Psoas muscle (tissue), 8 donors: ENCODE measurements at regions of chr9 and their contacts with region 1.

Region 1: DNA sequence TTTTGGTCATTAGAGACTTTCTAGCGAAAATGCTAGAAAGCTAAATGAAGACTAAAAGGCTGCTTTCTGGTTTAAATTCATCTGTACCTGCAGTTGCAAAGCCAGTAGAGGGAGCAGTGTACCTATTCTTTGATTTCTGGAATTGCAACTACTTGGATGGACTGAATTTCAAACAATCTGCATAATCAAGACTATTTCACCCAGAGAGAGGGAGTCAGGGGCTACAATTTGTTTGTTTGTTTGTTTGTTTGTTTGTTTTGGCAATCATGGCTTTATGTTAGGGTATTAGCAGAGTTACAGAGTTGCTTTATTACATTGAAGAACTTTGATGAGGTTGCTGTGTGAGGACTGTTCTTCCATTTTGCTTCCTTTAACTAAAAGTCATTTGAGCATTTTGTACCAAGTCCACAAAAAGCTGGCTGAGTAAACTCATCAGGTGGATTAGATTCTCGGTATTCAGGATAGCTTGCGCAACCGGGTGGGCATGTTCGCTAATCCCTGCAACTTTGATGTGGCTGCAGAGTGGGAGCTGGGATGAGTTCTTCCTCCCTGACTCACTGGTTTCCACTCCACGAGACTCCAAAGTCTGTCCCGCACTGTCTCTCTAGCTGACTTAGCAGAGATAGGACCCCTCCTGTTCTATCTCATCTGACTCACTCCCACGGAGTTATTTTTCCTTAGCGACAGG is 80.0 kb upstream of the TUT7 start:
- DNase-seq: peak; percentile 60 to 74
- ATAC-seq: peak; percentile 39 to 68 (median 60)
- H3K4me3 ChIP-seq: no peak overlapping the region
- H3K27ac ChIP-seq: no peak overlapping the region
- H3K4me1 ChIP-seq: no peaks in the 10 kb centered on the region
- H3K27me3 ChIP-seq: no peaks in the 10 kb centered on the region
- CTCF ChIP-seq: peak; percentile 72

Region 2: GRCh38 chr9:86354011-86354817 is 80.0 kb before region 1 on chr9 and contains the start of gene TUT7:
- intact Hi-C with region 1: no loop called
- DNase-seq: peak; percentile 96 to 98
- ATAC-seq: peak; percentile 97 to 99 (median 98)
- H3K4me3 ChIP-seq: peak within 1 kb of the TSS; percentile 83
- H3K27ac ChIP-seq: peak within 1 kb of the TSS; percentile 94
- H3K4me1 ChIP-seq: peaks cover 45% of the 10 kb centered on the region
- H3K27me3 ChIP-seq: no peaks in the 10 kb centered on the region
- CTCF ChIP-seq: no peak
- total RNA-seq, gene TUT7: 13.5 to 21.3 (median 18.2) TPM

Region 3: DNA sequence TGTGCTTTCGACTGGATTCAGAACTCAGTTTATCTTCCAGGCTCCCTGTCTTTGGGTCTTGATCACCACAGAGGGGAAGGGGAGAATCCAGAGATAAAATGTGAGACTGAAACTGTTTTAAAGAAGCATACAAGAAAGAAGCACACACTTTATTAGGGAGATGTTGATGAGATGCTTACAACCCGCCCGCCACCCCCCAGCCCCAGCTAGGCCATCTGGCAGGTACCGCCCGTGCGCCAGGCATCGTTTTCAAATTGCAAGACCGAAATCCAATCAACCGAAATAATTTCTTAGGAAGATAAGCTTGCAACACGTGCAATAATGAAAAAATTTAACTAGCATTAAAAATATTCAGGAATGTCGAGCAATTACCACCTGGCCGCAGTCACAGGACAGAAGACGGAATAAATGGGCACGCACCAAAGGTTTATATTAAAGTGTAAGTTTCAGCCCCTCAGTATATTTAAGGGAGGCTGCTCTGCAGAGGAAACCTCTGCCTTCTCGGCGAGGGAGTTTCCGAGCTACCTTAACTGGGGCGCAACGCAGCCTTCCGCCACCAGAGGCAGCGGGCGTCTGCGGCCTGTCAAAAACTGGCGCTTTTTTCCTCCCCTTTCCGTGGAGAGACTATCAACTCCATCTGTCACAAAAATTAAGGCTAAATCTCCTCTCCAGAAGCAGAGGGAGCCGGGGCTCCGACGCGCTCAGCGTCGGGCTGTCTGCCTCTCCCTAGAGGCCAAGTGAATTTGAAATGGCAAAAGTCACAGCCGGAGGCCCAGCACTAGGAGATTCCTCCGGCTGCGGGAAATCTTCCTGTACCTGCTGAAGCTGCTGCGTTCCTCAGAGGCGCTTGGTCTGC is 514.1 kb after region 1 on chr9:
- intact Hi-C with region 1: loop called in 1 of 2 experiments (anchors 10 kb)
- DNase-seq: peak; percentile 83 to 88
- ATAC-seq: peak; percentile 73 to 85 (median 76)
- H3K4me3 ChIP-seq: peak overlapping the region; percentile 86
- H3K27ac ChIP-seq: peak overlapping the region; percentile 83
- H3K4me1 ChIP-seq: peaks cover 6% of the 10 kb centered on the region
- H3K27me3 ChIP-seq: peaks cover 0 to 12% (median 0%) of the 10 kb centered on the region in 3 donors
- CTCF ChIP-seq: peak; percentile 91

Region 4: DNA sequence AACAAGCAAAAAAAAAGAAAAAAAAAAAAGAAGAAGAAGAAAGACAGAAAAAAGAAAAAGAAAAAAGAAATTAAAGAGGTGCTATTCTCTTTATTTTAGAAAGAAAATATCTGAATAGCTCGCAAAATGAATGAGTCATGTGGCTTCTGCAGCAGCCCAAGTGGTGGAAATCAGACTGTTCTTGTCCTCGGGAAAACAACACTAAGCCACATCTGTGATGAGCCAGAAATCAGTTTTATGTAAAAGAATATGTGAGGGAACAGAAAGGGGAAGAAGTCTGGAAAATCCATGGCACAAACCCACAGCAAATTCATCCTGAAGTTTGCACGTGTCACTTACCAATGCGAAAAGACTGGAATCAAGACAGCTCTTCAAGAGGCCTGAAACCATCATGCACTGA is 631.8 kb after region 1 on chr9:
- intact Hi-C with region 1: loop called in 1 of 2 experiments (anchors 2 kb)
- DNase-seq: no peak
- ATAC-seq: no peak
- H3K4me3 ChIP-seq: no peak overlapping the region
- H3K27ac ChIP-seq: no peak overlapping the region
- H3K4me1 ChIP-seq: peaks cover 20% of the 10 kb centered on the region
- H3K27me3 ChIP-seq: no peaks in the 10 kb centered on the region
- CTCF ChIP-seq: no peak